ENCODE measurements at regions of chr2 and their contacts with region 1.

Region 1: GRCh38 chr2:191218292-191218898 is 26.8 kb upstream of the MYO1B start:
- DNase-seq: peak; percentile 75
- H3K4me3 ChIP-seq: no peak overlapping the region
- H3K27ac ChIP-seq: no peak overlapping the region
- H3K4me1 ChIP-seq: no peaks in the 10 kb centered on the region
- H3K27me3 ChIP-seq: peaks cover 0 to 2% of the 10 kb centered on the region in 2 experiments
- CTCF ChIP-seq: peak; percentile 66 to 67
- POLR2A ChIP-seq: no peak

Region 2: DNA sequence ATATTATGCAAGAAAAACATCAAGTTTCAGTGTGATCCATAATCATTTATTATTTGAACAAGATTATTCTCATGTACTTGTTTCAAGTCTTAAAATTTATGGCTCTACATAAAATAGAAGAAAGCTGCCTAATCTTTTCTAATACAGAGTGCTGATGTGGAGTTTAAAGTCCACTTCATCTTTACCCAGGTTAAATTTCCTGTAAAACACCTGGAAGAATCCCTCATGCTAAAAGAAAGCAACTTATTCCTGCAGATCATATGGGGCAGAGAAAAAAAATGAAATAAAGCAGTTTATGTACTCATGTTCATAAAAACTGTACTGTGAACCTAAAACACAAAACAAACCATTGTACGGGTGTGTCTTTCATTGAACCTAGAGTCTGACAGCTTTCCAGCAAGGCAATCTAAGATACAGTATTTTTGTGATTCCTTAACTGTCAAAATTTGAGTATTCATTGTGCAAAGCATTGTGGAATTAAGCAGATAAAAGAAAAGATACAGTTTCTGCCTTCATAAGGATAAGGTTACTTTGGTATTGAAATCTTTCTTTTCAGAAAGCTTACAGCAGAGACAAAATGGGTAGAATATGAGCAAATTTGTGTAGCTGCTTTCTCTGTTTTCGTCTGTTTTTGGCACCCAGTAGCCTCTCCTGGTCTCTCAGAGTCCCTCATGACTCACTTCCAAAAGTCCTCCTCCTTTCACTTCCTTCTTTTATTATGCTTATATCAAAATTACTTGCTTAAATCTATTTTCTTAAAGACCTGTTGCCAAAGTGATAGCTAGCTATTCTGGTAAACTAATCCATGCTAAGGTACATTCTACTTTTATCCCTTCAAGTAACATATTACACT is 364.6 kb before region 1 on chr2:
- CTCF ChIA-PET with region 1: no interaction called
- POLR2A ChIA-PET with region 1: no interaction called
- dilution Hi-C with region 1: no loop called
- intact Hi-C with region 1: no loop called
- DNase-seq: peak; percentile 54
- H3K4me3 ChIP-seq: no peak overlapping the region
- H3K27ac ChIP-seq: no peak overlapping the region
- H3K4me1 ChIP-seq: peaks cover 9% of the 10 kb centered on the region
- H3K27me3 ChIP-seq: no peaks in the 10 kb centered on the region
- CTCF ChIP-seq: no peak
- POLR2A ChIP-seq: no peak

Region 3: GRCh38 chr2:191165176-191165643 is 53.2 kb before region 1 on chr2:
- CTCF ChIA-PET with region 1: interaction called, 67 read pairs
- POLR2A ChIA-PET with region 1: no interaction called
- dilution Hi-C with region 1: no loop called
- intact Hi-C with region 1: loop called (anchors 1 kb)
- DNase-seq: peak; percentile 68
- H3K4me3 ChIP-seq: no peak overlapping the region
- H3K27ac ChIP-seq: no peak overlapping the region
- H3K4me1 ChIP-seq: peaks cover 3% of the 10 kb centered on the region
- H3K27me3 ChIP-seq: no peaks in the 10 kb centered on the region
- CTCF ChIP-seq: peak; percentile 48 to 52
- POLR2A ChIP-seq: no peak

Region 4: DNA sequence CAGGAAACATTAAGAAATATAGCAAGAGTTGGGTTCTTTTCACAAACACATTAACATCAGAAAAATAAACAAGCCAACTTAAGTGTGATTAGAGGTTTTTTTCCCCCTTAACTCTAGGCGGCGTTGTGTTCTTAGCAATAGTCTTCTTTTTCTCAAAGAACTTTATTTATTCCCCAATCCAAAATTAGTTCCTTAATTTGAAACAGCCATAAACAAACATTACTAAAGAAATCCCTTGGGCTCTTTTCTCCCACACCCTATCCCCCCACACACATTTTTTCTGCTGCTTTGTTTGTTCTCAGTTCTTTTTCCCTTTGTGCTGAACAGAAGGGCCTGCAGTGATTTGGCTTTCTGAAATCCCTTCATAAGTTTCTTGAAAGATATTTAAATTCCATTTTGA is 13.6 kb after region 1 on chr2:
- CTCF ChIA-PET with region 1: interaction called, 19 read pairs
- POLR2A ChIA-PET with region 1: no interaction called
- dilution Hi-C with region 1: no loop called
- intact Hi-C with region 1: no loop called
- DNase-seq: no peak
- H3K4me3 ChIP-seq: no peak overlapping the region
- H3K27ac ChIP-seq: no peak overlapping the region
- H3K4me1 ChIP-seq: no peaks in the 10 kb centered on the region
- H3K27me3 ChIP-seq: no peaks in the 10 kb centered on the region
- CTCF ChIP-seq: peak; percentile 9 to 12
- POLR2A ChIP-seq: no peak

Region 5: DNA sequence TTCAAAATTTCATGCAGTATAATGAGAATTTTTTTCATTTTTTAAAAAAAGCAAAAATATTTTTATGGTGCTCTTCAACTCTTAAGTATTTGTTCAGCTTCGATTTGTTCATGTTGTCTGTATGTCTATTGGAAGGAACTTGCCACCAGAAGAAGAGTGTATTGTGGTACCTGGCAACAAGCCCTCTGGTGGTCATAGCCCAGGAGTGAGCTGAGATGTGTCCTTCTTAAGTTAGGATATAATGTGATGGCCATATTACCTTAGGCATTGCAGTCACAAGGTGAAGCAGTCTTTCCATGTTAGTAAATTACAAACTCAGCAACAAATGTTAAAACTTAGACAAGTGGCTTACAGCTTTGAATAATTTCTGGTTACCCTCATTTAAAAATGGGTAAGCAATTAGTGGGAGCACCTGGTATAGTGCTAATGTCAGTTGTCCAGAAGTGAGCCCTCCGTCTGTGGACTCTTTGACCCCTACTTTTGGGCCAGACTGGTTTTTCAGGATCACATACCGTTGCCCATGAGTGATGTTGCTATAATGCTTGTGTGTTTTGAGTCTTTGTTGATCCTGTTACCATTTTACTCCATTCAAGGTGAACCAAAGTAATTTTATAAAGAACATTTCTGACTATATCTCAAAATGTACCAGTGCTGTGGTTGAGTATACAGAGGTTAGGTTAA is 84.2 kb after region 1 on chr2:
- CTCF ChIA-PET with region 1: interaction called, 10 read pairs
- POLR2A ChIA-PET with region 1: no interaction called
- dilution Hi-C with region 1: no loop called
- intact Hi-C with region 1: no loop called
- DNase-seq: peak; percentile 17
- H3K4me3 ChIP-seq: no peak overlapping the region
- H3K27ac ChIP-seq: no peak overlapping the region
- H3K4me1 ChIP-seq: no peaks in the 10 kb centered on the region
- H3K27me3 ChIP-seq: no peaks in the 10 kb centered on the region
- CTCF ChIP-seq: peak; percentile 12 to 25
- POLR2A ChIP-seq: no peak

Region 6: DNA sequence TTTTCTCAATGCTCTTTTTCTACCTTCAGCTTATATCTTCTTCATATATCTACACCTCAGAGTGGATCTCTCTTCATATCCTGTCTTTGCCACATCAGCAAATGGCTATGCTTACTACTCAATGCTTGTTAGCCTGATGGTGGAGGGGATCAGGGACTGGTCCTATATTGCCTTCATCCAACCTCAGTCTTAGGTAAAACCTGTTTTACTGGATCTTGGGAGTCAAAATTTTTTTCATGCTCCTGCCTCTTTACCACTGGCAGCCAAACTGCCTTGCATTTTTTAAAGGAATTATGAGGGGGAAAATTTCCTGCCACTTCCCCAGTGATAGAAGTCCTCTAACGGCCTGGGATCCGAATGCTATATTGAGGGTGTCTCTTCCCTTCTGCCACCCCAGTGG is 276.1 kb after region 1 on chr2:
- CTCF ChIA-PET with region 1: interaction called, 149 read pairs
- POLR2A ChIA-PET with region 1: no interaction called
- dilution Hi-C with region 1: no loop called
- intact Hi-C with region 1: no loop called
- DNase-seq: no peak
- H3K4me3 ChIP-seq: no peak overlapping the region
- H3K27ac ChIP-seq: no peak overlapping the region
- H3K4me1 ChIP-seq: no peaks in the 10 kb centered on the region
- H3K27me3 ChIP-seq: peaks cover 2 to 3% of the 10 kb centered on the region in 2 experiments
- CTCF ChIP-seq: no peak
- POLR2A ChIP-seq: no peak

Region 7: GRCh38 chr2:191508738-191509137 is 290.3 kb after region 1 on chr2:
- CTCF ChIA-PET with region 1: interaction called, 149 read pairs
- POLR2A ChIA-PET with region 1: no interaction called
- dilution Hi-C with region 1: no loop called
- intact Hi-C with region 1: no loop called
- DNase-seq: no peak
- H3K4me3 ChIP-seq: no peak overlapping the region
- H3K27ac ChIP-seq: no peak overlapping the region
- H3K4me1 ChIP-seq: no peaks in the 10 kb centered on the region
- H3K27me3 ChIP-seq: no peaks in the 10 kb centered on the region
- CTCF ChIP-seq: no peak
- POLR2A ChIP-seq: no peak

Measured in endothelial cell of umbilical vein (primary cell).